Posterior vena cava (tissue), 2 donors: ENCODE measurements at regions of chr1 and their contacts with region 1.

Region 1: DNA sequence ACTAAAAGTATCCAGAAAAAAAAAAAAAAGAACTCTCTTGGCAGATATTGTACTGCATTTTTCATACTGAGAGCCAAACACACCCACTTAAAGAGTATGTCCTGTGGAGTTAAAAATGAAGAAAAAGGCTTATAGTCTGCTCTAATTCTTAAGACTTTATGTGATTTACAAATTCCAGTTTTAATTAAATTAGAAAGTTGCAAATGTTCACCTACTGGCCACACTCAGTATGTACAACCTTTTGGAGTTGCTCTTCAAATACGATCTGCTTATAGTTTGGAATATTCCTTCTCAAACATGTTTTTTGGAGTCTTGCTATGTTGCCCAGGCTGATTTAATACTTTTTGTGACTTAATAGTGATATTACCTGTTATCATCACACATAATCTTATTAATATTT is 107.7 kb downstream of the LEPR start:
- DNase-seq: no peak

Region 2: DNA sequence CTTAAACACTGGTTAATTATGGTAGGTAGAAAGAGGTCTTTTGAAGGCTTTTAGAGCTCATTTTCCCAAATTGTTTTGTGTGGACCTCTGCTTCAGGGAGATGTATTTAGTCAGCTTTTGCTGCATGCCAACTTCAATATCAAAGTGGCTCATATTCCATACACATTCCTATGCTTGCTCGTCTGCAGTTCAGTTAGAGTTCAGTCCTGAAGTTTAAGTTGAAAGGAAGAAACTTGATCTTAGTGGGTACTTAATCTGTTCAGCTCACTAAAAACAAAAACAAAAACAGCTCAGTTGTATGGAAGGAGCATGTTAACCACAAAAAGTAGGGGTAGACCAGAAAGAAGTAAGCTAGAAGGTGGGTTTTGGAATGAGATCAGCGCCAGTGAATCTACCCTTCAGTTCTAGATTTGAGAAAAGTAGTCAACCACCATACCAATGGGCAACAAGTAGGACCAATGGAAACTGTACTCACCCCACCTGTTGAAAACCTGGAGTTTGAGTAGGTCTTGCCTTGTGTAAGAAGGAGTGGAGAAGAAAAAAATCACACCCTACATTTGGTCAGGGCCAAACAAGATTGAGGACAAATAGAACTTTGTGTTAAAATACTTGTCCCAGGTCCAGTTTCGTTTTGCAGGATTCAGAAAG is 49.6 kb before region 1 on chr1:
- intact Hi-C with region 1: no loop called
- DNase-seq: no peak

Region 3: GRCh38 chr1:65577278-65577677 is 49.1 kb after region 1 on chr1:
- intact Hi-C with region 1: loop called in 1 of 2 experiments (anchors 1 kb)
- DNase-seq: no peak